HepG2 (cell line): ENCODE measurements at regions of chr2 and their contacts with region 1.

Region 1: DNA sequence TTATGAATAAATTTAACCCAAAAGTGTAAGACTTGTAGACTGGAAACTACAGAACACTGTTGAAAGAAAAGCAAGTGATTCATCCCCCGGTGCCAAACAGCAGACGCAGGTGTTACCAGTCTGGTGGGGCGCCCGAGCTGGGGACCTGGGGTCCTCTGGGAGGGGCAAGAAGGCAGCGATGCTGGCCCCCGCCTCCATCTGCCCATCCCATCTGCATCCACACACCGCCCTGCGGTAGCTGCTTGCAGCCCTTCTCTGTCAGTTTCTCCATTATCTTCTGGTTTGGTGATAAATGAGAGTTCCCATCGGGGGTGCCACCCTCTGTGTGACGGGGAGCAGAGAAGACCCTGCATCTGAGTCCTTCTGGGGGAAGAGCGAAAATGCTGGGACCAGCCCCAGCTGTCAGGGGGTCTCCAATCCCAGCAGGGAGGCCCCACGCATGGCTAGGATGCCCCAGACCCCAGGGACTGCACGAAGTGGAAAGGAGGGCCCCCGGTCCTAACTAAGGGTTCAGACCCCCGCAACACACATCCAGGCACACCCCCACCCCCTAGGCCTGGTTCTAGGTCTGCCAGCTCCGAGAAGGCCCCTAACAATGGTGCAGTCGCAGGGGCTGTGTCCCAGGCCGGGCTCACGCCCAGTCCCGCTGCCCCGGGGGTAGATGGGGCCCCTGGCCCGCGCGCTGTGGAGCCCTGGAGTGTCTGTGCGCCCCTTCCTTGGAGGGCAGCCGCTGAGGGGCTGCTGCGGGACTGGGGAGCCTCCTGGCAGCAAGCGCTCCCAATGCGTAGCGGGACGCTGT is 686 bp upstream of the RGPD8 start:
- DNase-seq: no peak
- ATAC-seq: no peak
- H3K4me3 ChIP-seq: peak overlapping the region in 1 of 3 experiments; percentile 58; a peak in 1 of 6 replicates
- H3K27ac ChIP-seq: no peak overlapping the region
- H3K4me1 ChIP-seq: peaks cover 37% of the 10 kb centered on the region
- H3K27me3 ChIP-seq: peaks cover 0 to 18% of the 10 kb centered on the region in 2 experiments; a peak in 1 of 5 replicates
- CTCF ChIP-seq: no peak
- EP300 ChIP-seq: no peak
- POLR2A ChIP-seq: no peak
- RAD21 ChIP-seq: no peak

Region 2: GRCh38 chr2:112259509-112260294 is 174.4 kb before region 1 on chr2:
- CTCF ChIA-PET with region 1: interaction called, 18 read pairs
- POLR2A ChIA-PET with region 1: no interaction called
- in situ Hi-C with region 1: loop called (anchors 25 kb)
- intact Hi-C with region 1: loop called (anchors 1 kb)
- DNase-seq: peak; percentile 65
- ATAC-seq: peak; percentile 71
- H3K4me3 ChIP-seq: peak overlapping the region; percentile 43 to 63 (median 44)
- H3K27ac ChIP-seq: no peak overlapping the region
- H3K4me1 ChIP-seq: peaks cover 23% of the 10 kb centered on the region
- H3K27me3 ChIP-seq: 0 out of 5 replicates have a peak, but pooled peaks cover 0 to 1% of the 10 kb centered on the region in 2 experiments
- CTCF ChIP-seq: peak; percentile 99
- EP300 ChIP-seq: no peak
- POLR2A ChIP-seq: no peak
- RAD21 ChIP-seq: peak; percentile 94

Region 3: GRCh38 chr2:112343827-112344585 is 90.1 kb before region 1 on chr2:
- CTCF ChIA-PET with region 1: no interaction called
- POLR2A ChIA-PET with region 1: no interaction called
- in situ Hi-C with region 1: no loop called
- intact Hi-C with region 1: no loop called
- DNase-seq: no peak
- ATAC-seq: no peak
- H3K4me3 ChIP-seq: no peak overlapping the region
- H3K27ac ChIP-seq: no peak overlapping the region
- H3K4me1 ChIP-seq: peaks cover 22% of the 10 kb centered on the region
- H3K27me3 ChIP-seq: no peaks in the 10 kb centered on the region
- CTCF ChIP-seq: no peak
- EP300 ChIP-seq: no peak
- POLR2A ChIP-seq: no peak
- RAD21 ChIP-seq: no peak